ENCODE measurements at regions of chr12 and their contacts with region 1.

Region 1: DNA sequence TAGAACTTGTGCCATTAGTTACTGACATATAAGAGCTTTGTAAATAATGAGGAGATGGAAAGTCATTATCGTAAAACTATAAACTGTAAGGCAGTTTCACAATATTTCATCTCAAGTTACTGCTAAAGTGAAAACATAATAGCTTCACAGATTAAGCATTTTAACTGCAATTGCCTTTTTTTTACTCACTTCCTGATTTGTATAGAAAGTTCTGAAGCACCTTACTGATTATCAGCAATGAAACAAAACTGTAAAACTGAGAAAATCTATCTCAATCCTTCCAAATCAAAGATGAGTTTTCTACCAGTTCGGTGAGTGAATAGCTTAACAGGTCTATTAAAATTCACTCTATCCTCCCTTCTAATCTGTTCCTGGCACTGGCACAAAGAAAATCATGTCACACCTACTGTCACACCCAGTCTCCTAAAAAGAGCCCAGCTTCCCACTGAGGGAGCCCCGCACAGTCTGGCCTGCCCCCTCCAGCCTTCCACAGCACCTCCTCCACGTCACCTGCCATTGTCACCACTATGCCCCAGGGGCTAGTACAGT is 161.4 kb upstream of the ABCD2 start:
- DNase-seq: no peak
- H3K4me3 ChIP-seq: no peak overlapping the region
- H3K27ac ChIP-seq: no peak overlapping the region
- H3K4me1 ChIP-seq: no peaks in the 10 kb centered on the region
- H3K27me3 ChIP-seq: no peaks in the 10 kb centered on the region
- CTCF ChIP-seq: no peak
- POLR2A ChIP-seq: no peak

Region 2: DNA sequence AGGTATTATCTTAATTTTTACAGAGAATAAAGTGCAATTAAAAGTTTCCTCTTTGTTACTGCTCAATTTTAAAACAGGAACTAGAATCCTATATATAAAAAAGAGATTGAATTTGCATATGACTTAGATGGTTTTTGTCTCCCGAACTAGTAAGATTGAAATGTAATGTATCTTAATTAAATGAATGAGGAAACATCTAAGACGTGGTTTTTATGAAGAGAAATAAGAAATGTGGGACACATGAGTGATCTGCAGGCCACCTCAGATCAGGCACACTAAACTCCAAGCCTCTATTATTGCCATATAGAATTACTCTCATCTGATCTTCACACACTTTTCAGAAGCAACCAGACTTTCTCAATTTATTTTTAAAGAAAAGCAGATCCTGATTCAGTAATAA is 1034.2 kb before region 1 on chr12:
- intact Hi-C with region 1: no loop called
- DNase-seq: no peak
- H3K4me3 ChIP-seq: no peak overlapping the region
- H3K27ac ChIP-seq: no peak overlapping the region
- H3K4me1 ChIP-seq: no peaks in the 10 kb centered on the region
- H3K27me3 ChIP-seq: no peaks in the 10 kb centered on the region
- CTCF ChIP-seq: no peak
- POLR2A ChIP-seq: no peak

Region 3: GRCh38 chr12:39831587-39832308 is 50.8 kb after region 1 on chr12:
- intact Hi-C with region 1: no loop called
- DNase-seq: no peak
- H3K4me3 ChIP-seq: no peak overlapping the region
- H3K27ac ChIP-seq: no peak overlapping the region
- H3K4me1 ChIP-seq: no peaks in the 10 kb centered on the region
- H3K27me3 ChIP-seq: no peaks in the 10 kb centered on the region
- CTCF ChIP-seq: no peak
- POLR2A ChIP-seq: no peak

Region 4: GRCh38 chr12:39860695-39861094 is 79.7 kb after region 1 on chr12:
- intact Hi-C with region 1: no loop called
- DNase-seq: no peak
- H3K4me3 ChIP-seq: no peak overlapping the region
- H3K27ac ChIP-seq: no peak overlapping the region
- H3K4me1 ChIP-seq: no peaks in the 10 kb centered on the region
- H3K27me3 ChIP-seq: no peaks in the 10 kb centered on the region
- CTCF ChIP-seq: no peak
- POLR2A ChIP-seq: no peak

Region 5: DNA sequence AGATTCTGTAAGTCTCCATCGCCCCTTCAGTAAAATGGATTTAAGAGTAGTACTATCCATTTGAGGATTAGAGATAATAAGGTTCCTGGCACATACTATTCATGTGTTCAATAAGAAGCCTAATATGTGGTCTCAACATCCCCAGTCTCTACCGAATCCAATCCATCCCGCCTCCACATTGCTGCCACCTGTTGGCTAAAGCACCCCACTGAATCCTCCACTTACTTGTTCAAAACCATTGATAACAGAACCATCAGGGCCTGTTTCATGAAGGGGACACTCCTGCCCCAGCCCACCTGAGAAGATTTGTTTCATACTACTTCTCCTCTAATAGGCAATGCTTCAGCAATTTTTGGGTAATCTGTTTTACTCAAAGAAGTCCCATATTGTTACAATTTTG is 177.4 kb after region 1 on chr12:
- intact Hi-C with region 1: loop called (anchors 5 kb)
- DNase-seq: no peak
- H3K4me3 ChIP-seq: no peak overlapping the region
- H3K27ac ChIP-seq: no peak overlapping the region
- H3K4me1 ChIP-seq: no peaks in the 10 kb centered on the region
- H3K27me3 ChIP-seq: no peaks in the 10 kb centered on the region
- CTCF ChIP-seq: no peak
- POLR2A ChIP-seq: no peak

Region 6: DNA sequence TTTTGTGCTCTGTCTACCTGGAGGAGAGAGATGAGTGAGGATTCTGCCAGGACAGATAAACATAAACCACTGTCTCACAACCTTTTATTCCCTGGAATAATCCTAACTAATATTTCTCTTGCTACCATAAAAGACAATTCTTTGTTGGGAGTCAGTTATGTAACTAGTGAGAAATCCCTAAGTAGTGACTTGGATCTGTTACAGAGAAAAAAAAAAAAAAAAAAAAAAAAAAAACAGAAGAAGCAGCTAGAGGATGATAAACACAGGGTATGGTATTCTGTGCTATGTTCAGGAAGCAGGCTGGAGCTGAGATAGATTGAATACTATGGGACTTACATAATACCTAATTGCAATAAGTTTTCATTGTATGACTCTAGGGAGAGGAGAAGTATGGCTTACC is 1090.0 kb after region 1 on chr12:
- intact Hi-C with region 1: no loop called
- DNase-seq: no peak
- H3K4me3 ChIP-seq: no peak overlapping the region
- H3K27ac ChIP-seq: no peak overlapping the region
- H3K4me1 ChIP-seq: no peaks in the 10 kb centered on the region
- H3K27me3 ChIP-seq: no peaks in the 10 kb centered on the region
- CTCF ChIP-seq: no peak
- POLR2A ChIP-seq: no peak